ENCODE measurements at regions of chrX and their contacts with region 1.

Region 1: DNA sequence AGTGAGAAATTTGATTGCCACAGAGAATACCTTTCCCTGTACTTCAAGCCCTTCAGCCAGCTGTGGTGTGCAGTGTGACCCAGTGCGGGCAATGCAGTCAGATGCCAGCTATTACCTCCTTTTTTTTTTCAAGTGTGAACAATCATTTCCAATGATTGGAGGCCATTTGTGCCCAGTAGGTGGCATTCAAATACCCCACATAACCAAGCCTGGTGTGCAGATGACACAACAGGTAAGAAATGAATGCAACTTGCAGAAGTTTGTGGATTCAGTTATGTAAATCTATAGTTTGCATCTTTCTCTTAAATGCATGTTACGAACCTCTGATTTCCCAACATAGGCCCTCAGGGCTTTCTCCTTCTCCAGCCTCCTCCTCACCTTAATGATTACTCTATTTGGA is 98.0 kb downstream of the CLCN4 start:
- DNase-seq: peak; percentile 43
- H3K4me3 Mint-ChIP-seq: no peak overlapping the region
- H3K27ac Mint-ChIP-seq: no peak overlapping the region
- H3K4me1 Mint-ChIP-seq: no peaks in the 10 kb centered on the region
- H3K27me3 Mint-ChIP-seq: no peaks in the 10 kb centered on the region
- CTCF ChIP-seq: peak; percentile 45

Region 2: DNA sequence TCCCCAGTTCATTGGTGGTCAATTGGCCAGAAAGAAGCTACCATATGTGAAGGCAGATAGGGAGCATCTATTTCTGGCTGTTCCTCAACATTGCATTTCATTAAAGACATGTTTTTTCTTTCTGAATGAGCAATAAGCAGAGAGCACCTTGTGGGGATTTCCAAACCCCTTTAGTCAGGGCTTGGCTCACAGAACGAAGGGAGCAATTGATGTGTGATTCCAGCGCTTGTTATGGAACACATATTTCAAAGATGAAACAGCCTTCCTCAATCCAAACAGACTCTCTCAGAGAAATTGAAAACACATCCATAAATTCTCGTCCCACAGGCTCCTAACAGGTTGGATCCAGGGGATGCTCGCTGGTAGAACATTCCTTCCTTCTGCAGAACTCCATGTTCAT is 13.8 kb before region 1 on chrX:
- CTCF ChIA-PET with region 1: no interaction called
- intact Hi-C with region 1: no loop called
- DNase-seq: no peak
- H3K4me3 Mint-ChIP-seq: no peak overlapping the region
- H3K27ac Mint-ChIP-seq: no peak overlapping the region
- H3K4me1 Mint-ChIP-seq: no peaks in the 10 kb centered on the region
- H3K27me3 Mint-ChIP-seq: no peaks in the 10 kb centered on the region
- CTCF ChIP-seq: no peak

Region 3: DNA sequence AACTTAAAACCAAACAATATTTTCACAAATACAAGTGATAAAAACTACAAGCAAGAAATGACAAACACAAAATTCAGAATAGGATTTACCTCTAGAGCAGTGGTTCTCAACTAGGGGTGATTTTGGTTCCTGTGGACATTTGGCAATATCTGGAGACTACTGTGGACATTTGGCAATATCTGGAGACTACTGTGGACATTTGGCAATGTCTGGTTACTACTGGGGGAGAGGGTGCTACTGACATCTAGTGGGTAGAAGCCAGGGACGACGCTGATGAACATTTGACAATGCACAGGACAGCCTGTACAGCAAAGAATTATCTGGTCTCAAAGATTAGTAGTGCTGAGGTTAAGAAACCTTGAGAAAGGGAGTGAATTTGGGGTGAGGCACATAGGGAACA is 71.8 kb after region 1 on chrX:
- CTCF ChIA-PET with region 1: no interaction called
- intact Hi-C with region 1: loop called (anchors 1 kb)
- DNase-seq: peak; percentile 30
- H3K4me3 Mint-ChIP-seq: no peak overlapping the region
- H3K27ac Mint-ChIP-seq: no peak overlapping the region
- H3K4me1 Mint-ChIP-seq: peaks cover 14% of the 10 kb centered on the region
- H3K27me3 Mint-ChIP-seq: no peaks in the 10 kb centered on the region
- CTCF ChIP-seq: no peak

Region 4: DNA sequence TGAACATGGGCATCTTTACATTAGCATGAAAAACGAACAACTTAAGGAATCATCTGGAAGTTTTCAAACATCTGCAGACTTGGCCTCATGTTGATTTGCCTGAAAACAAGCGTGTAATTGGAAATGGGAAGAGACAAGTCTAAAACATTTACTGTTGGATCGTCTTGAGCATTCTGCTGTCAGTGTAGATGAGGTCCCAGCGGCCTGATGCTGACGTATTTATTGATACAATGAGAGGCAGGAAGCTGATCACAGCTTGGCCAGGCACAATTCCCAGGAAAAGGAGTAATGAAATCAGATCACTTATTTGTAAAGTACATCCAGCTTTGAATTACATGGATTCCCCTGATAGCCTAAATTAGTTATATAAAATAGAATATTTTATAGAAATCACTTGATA is 112.7 kb after region 1 on chrX:
- CTCF ChIA-PET with region 1: no interaction called
- intact Hi-C with region 1: no loop called
- DNase-seq: no peak
- H3K4me3 Mint-ChIP-seq: no peak overlapping the region
- H3K27ac Mint-ChIP-seq: no peak overlapping the region
- H3K4me1 Mint-ChIP-seq: no peaks in the 10 kb centered on the region
- H3K27me3 Mint-ChIP-seq: peaks cover 10% of the 10 kb centered on the region
- CTCF ChIP-seq: no peak

Region 5: GRCh38 chrX:10379878-10380277 is 125.1 kb after region 1 on chrX:
- CTCF ChIA-PET with region 1: no interaction called
- intact Hi-C with region 1: no loop called
- DNase-seq: no peak
- H3K4me3 Mint-ChIP-seq: no peak overlapping the region
- H3K27ac Mint-ChIP-seq: no peak overlapping the region
- H3K4me1 Mint-ChIP-seq: peaks cover 10% of the 10 kb centered on the region
- H3K27me3 Mint-ChIP-seq: no peaks in the 10 kb centered on the region
- CTCF ChIP-seq: no peak

Measured in Calu3 (cell line).